ENCODE measurements at regions of chr2 and their contacts with region 1.

Region 1: DNA sequence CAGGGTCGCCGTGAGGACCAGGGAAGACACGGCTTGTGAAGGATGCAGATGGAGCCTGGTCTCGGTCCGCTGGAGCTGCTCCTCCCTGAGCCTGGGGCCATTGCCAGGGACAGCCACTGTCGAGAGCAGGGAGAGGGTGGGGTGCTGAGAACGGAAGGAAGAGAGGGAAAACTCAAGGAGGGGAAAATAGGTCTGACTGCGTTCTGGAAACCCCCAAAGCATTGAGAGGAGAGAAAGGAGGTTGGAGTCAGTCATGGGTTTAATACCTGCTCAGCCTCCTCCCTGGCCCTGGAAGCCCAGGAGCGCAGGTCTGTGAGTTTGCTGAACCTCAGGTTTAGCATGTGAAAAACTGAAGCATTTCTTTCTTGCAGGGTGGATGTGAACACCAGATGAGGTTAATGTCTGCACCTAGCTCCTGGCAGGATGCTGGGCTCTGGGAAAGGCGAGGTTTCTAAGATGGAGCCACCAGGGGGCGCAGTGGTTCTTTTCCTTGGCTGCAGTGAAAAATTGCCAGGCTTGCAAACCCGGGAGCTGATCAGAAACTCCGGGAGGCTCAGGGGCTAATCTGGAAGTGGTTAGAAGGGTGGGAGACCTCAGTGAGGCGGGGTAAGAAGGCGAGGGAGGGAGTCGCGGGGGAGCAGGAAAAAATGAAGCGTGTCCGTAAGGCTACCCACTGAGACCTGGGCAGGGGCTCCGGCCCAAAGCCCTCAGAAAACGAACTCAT is 33.6 kb upstream of the RNF149 start:
- DNase-seq: peak; percentile 75
- ATAC-seq: peak; percentile 70
- H3K4me3 Mint-ChIP-seq: no peak overlapping the region
- H3K27ac Mint-ChIP-seq: peak overlapping the region; percentile 5
- H3K4me1 Mint-ChIP-seq: peaks cover 25% of the 10 kb centered on the region
- H3K27me3 Mint-ChIP-seq: peaks cover 2% of the 10 kb centered on the region

Region 2: DNA sequence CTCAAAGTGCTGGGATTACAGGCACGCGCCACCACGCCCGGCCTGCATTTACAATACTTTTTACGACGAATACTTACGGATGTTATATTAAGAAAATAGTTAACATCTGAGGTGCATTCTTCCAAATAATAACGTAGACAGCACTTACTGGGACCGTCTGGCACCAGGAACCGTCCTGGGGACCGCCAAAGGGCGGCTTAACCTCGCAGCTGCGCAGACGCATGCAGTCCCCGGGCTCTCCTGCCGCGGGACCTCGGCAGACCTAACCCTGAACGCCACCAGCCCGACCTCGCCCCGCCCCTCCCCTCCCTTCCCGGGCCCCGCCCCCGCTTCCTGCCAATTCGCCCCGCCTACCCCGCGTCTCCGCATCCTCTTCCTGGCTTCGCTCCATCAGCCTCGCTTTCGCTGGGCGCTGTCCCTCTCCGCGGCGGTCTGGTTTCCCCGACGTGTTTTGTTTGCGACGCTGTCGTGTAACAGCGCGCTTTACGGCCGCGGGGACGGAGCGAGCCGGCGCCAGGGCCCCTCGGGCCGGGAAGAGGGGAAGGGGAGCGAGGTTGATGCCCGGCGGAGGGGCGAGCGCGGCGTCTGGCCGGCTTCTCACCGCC is 89.6 kb before region 1 on chr2 and contains the start of gene CNOT11:
- CTCF ChIA-PET with region 1: interaction called, 15 read pairs
- DNase-seq: peak; percentile 99
- ATAC-seq: peak; percentile 87
- H3K4me3 Mint-ChIP-seq: peak within 1 kb of the TSS; percentile 91
- H3K27ac Mint-ChIP-seq: peak within 1 kb of the TSS; percentile 97
- H3K4me1 Mint-ChIP-seq: peaks cover 43% of the 10 kb centered on the region
- H3K27me3 Mint-ChIP-seq: no peaks in the 10 kb centered on the region
- total RNA-seq, gene CNOT11: 57.4 to 71.9 TPM

Region 3: GRCh38 chr2:101272045-101272784 is 69.8 kb before region 1 on chr2:
- CTCF ChIA-PET with region 1: no interaction called
- DNase-seq: no peak
- ATAC-seq: peak; percentile 94
- H3K4me3 Mint-ChIP-seq: peak overlapping the region; percentile 15
- H3K27ac Mint-ChIP-seq: peak overlapping the region; percentile 82
- H3K4me1 Mint-ChIP-seq: peaks cover 60% of the 10 kb centered on the region
- H3K27me3 Mint-ChIP-seq: no peaks in the 10 kb centered on the region

Region 4: GRCh38 chr2:101328474-101329007 is 13.5 kb before region 1 on chr2:
- CTCF ChIA-PET with region 1: interaction called, 87 read pairs
- DNase-seq: peak; percentile 81
- ATAC-seq: peak; percentile 90
- H3K4me3 Mint-ChIP-seq: no peak overlapping the region
- H3K27ac Mint-ChIP-seq: no peak overlapping the region
- H3K4me1 Mint-ChIP-seq: peaks cover 3% of the 10 kb centered on the region
- H3K27me3 Mint-ChIP-seq: no peaks in the 10 kb centered on the region

Region 5: DNA sequence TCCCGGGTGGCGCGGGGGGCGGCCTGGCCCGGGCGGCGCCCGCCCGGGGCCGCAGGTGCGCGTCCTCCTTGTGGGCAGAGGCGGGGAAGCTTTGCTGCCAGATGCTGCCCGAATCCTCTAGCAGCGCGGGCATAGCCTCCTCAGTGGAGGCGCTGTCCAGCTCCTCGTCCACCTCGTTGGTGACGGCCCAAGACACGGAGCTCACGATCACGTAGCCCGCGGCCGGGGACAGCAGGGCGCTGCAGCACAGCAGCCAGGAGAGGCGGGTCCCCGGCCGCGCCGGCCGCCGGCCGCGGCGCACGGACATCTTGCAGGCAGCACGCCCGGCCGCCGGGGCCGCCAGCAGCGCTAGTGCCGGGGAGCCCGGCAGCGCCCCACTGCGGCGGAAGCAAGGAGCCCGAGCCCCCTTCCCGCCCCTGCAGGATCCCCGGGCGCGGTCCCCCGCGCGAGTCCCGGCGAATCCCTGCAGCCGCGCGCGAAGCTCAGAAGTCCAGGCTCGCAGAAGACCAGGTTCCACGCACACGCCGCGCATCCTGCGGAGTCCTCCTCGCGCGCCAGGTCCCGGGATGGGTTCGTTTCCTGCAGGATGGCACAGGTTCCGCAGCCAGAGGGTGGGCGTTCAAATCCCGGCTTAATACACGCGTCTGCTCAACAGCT is 45.2 kb after region 1 on chr2 and contains the start of gene CREG2:
- CTCF ChIA-PET with region 1: interaction called, 51 read pairs
- DNase-seq: peak; percentile 59
- ATAC-seq: peak; percentile 89
- H3K4me3 Mint-ChIP-seq: peak within 1 kb of the TSS; percentile 42
- H3K27ac Mint-ChIP-seq: no peak within 1 kb of the TSS
- H3K4me1 Mint-ChIP-seq: peaks cover 11% of the 10 kb centered on the region
- H3K27me3 Mint-ChIP-seq: peaks cover 69% of the 10 kb centered on the region
- total RNA-seq, gene CREG2: not detected

Region 6: GRCh38 chr2:101597351-101597944 is 255.4 kb after region 1 on chr2:
- CTCF ChIA-PET with region 1: no interaction called
- DNase-seq: no peak
- ATAC-seq: no peak
- H3K4me3 Mint-ChIP-seq: no peak overlapping the region
- H3K27ac Mint-ChIP-seq: no peak overlapping the region
- H3K4me1 Mint-ChIP-seq: no peaks in the 10 kb centered on the region
- H3K27me3 Mint-ChIP-seq: peaks cover 6% of the 10 kb centered on the region